AG04449 (cell line): ENCODE measurements at regions of chr2 and their contacts with region 1.

Region 1: GRCh38 chr2:72579591-72580180 is 246.1 kb downstream of the EXOC6B start:
- DNase-seq: no peak
- H3K4me3 ChIP-seq: no peak overlapping the region
- CTCF ChIP-seq: peak; percentile 33

Region 2: GRCh38 chr2:71550801-71551630 is 1028.7 kb before region 1 on chr2:
- CTCF ChIA-PET with region 1: interaction called, 24 read pairs
- POLR2A ChIA-PET with region 1: no interaction called
- DNase-seq: no peak
- H3K4me3 ChIP-seq: no peak overlapping the region
- CTCF ChIP-seq: no peak

Region 3: GRCh38 chr2:71923887-71924533 is 655.7 kb before region 1 on chr2:
- CTCF ChIA-PET with region 1: interaction called, 11 read pairs
- POLR2A ChIA-PET with region 1: no interaction called
- DNase-seq: no peak
- H3K4me3 ChIP-seq: no peak overlapping the region
- CTCF ChIP-seq: peak; percentile 48

Region 4: DNA sequence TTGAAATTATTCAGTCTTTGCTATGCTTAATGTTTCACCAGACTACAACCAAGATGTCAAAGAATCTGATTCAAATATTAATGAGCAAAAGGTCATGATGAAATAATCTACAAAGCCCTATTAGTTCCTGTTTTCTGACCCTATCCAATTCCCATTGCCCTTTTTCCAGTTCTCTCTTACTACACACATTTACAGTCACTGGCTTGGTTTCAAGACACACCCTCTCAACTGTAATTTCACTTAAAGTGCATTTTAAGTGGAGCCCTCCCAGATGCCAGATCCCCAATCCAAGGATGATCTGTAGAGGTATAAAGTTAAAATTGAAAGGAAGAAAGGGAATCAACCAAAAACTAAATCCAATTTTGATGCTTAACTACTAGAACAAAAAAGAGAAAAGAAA is 185.0 kb before region 1 on chr2:
- CTCF ChIA-PET with region 1: no interaction called
- POLR2A ChIA-PET with region 1: no interaction called
- DNase-seq: no peak
- H3K4me3 ChIP-seq: no peak overlapping the region
- CTCF ChIP-seq: no peak

Region 5: DNA sequence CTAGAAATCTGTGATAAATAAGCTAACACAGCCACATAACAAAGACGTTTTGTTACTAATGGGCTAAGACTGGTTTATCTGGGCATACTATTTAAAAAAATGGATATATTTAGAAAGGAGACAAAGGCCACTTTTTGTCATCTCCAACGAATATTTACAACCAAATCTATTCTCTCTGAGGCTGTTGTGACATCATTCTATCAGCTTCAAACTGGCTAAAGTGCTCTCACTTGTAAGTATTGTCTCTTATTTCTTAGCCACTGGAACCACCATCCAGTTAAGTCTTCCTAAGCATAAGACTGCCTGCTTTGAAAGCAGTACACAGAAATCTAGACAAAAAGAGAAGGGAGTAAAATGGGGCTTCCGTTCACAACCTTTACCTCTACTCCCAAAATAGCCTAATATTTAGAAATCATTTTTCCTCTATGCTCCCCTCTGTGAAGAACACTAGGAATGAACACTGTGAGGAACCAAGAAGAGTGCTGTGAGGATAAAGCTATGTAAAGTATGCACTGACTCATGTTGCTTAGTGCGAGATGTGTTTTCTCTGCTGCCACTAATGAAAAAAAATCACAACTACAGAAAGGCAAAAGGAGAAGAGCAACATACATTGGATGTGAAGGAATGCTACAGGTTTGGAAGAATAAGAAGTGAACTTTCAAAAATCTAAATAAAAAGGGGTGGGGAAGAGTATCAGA is 17.9 kb before region 1 on chr2:
- CTCF ChIA-PET with region 1: interaction called, 11 read pairs
- POLR2A ChIA-PET with region 1: interaction called, 3 read pairs
- DNase-seq: peak; percentile 50
- H3K4me3 ChIP-seq: no peak overlapping the region
- CTCF ChIP-seq: no peak

Region 6: DNA sequence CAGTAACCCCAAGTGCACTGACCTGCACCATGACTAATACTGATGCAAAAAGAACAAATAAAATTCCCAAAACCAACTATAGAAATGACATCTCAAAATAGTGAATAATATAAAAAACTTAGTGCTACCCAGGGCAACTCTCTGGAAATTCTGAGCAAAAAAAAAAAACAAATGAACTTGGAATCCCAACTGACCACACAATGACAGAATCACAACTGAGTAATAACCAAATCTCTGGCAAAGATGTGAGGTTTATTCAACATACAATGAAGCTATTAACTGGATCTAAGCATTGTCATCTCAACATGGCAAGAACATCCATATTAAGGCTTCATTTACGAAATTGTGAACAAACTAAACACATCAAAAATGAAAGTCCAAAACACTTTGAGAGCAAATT is 223.5 kb after region 1 on chr2:
- CTCF ChIA-PET with region 1: no interaction called
- POLR2A ChIA-PET with region 1: no interaction called
- DNase-seq: no peak
- H3K4me3 ChIP-seq: no peak overlapping the region
- CTCF ChIP-seq: no peak